ENCODE measurements at regions of chr13 and their contacts with region 1.

Region 1: DNA sequence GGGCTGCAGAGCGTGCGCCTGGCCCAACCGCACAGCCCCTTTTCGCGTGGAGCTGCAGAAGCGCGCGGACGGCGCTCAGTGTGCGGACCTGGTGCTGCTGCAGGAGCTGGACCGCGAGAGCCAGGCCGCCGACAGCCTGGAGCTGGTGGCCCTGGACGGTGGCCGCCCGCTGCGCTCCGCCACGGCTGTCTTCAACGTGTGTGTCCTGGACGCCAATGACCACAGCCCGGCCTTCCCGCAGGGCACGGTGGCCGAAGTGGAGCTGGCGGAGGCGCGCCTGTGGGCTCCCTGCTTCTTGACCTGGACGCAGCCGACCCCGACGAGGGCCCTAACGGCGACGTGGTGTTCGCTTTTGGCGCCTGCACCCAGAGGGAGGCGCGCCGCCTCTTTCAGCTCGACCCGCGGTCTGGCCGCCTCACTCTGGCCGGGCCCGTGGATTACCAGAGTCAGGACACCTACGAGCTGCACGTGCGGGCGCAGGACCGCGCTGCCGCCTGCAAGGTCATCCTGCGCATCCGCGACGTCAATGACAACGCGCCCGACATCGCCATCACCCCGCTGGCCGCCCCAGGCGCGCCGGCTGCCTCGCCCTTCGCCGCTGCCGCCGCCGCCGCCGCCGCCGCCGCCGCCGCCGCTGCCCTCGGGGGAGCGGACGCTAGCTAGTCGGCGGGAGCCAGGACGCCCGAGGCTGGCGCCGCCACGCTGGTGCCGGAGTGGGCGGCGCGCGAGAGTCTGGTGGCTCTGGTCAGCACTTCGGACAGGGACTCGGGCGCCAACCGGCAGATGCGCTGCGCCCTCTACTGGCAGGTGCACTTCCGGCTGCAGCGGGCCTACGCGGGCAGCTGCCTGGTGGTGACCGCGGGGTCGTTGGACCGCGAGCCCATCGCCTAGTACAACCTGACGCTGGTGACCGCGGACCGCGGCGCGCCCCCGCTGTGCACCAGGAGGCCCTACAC is 172.2 kb downstream of the OLFM4 start:
- DNase-seq: peak; percentile 62 to 92
- H3K4me3 ChIP-seq: peak overlapping the region; percentile 34 to 59 (median 40)
- H3K27ac ChIP-seq: no peak overlapping the region
- H3K4me1 ChIP-seq: peaks cover 0 to 7% (median 4%) of the 10 kb centered on the region in 4 experiments; a peak in 4 of 7 replicates
- H3K27me3 ChIP-seq: peaks cover 20 to 33% (median 32%) of the 10 kb centered on the region in 4 experiments
- CTCF ChIP-seq: peak; percentile 92 to 99 (median 93)
- EP300 ChIP-seq: peak in 1 of 2 experiments; percentile 58; a peak in 1 of 3 replicates
- POLR2A ChIP-seq: no peak
- RAD21 ChIP-seq: peak; percentile 68 to 76

Region 2: DNA sequence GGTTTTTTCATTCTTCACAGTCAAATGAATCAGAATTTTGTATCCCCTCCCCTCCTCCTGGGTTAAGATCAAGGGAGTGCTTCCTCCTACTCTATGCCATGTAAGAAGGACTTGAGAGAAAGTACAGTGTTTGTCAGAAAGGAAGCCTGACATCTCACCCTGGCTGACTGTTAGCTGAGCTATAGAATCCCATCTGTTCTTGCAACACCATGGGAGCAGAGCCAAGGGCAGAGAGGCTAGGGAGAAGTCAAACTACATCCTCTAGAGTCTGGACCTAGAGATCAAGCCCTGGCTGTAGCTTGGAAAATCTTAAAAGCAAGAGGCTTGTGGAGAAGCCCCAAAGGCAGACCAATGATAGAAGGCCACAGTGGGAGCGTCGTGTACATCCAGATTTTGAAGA is 26.2 kb before region 1 on chr13:
- CTCF ChIA-PET with region 1: interaction called, 17 read pairs
- POLR2A ChIA-PET with region 1: no interaction called
- DNase-seq: no peak
- H3K4me3 ChIP-seq: no peak overlapping the region
- H3K27ac ChIP-seq: no peak overlapping the region
- H3K4me1 ChIP-seq: no peaks in the 10 kb centered on the region
- H3K27me3 ChIP-seq: no peaks in the 10 kb centered on the region
- CTCF ChIP-seq: no peak
- EP300 ChIP-seq: no peak
- POLR2A ChIP-seq: no peak
- RAD21 ChIP-seq: no peak

Region 3: DNA sequence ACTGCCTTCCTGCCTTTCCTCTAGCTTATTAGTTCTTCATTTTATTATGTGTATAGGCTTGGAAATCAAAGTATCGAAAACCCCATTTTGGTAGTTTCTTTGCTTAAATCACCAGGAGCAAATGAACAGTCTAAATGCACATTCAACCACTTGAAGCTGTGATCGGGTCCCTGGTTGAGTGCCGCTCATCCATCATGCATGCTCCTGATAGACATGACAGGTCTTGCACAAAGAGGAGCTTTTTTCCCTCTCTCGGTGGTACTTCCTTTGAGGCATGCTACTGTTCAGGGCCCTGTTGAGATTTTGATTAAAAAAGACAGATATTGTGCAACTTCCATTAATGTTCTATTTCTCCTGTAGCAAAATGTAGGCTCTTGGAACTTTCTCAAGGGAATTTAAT is 13.7 kb after region 1 on chr13:
- CTCF ChIA-PET with region 1: interaction called, 15 read pairs
- POLR2A ChIA-PET with region 1: no interaction called
- DNase-seq: no peak
- H3K4me3 ChIP-seq: no peak overlapping the region
- H3K27ac ChIP-seq: no peak overlapping the region
- H3K4me1 ChIP-seq: no peaks in the 10 kb centered on the region
- H3K27me3 ChIP-seq: no peaks in the 10 kb centered on the region
- CTCF ChIP-seq: no peak
- EP300 ChIP-seq: no peak
- POLR2A ChIP-seq: no peak
- RAD21 ChIP-seq: no peak